HCT116 (cell line): ENCODE measurements at regions of chr1 and their contacts with region 1.

Region 1: GRCh38 chr1:197356723-197357533 is 88.9 kb downstream of the CRB1 start:
- DNase-seq: peak; percentile 42
- ATAC-seq: peak; percentile 91
- H3K4me3 ChIP-seq: no peak overlapping the region
- H3K27ac ChIP-seq: no peak overlapping the region
- H3K4me1 ChIP-seq: no peaks in the 10 kb centered on the region
- H3K27me3 ChIP-seq: no peaks in the 10 kb centered on the region
- CTCF ChIP-seq: peak; percentile 64 to 86 (median 79)
- POLR2A ChIP-seq: no peak
- RAD21 ChIP-seq: peak; percentile 86

Region 2: GRCh38 chr1:196723322-196724185 is 633.4 kb before region 1 on chr1:
- CTCF ChIA-PET with region 1: interaction called, 3 read pairs
- POLR2A ChIA-PET with region 1: no interaction called
- RAD21 ChIA-PET with region 1: no interaction called
- intact Hi-C with region 1: loop called (anchors 10 kb)
- DNase-seq: peak; percentile 64
- ATAC-seq: peak; percentile 99
- H3K4me3 ChIP-seq: no peak overlapping the region
- H3K27ac ChIP-seq: no peak overlapping the region
- H3K4me1 ChIP-seq: no peaks in the 10 kb centered on the region
- H3K27me3 ChIP-seq: no peaks in the 10 kb centered on the region
- CTCF ChIP-seq: peak; percentile 34 to 80 (median 79); a peak in 5 of 6 replicates
- POLR2A ChIP-seq: no peak
- RAD21 ChIP-seq: peak; percentile 53

Region 3: DNA sequence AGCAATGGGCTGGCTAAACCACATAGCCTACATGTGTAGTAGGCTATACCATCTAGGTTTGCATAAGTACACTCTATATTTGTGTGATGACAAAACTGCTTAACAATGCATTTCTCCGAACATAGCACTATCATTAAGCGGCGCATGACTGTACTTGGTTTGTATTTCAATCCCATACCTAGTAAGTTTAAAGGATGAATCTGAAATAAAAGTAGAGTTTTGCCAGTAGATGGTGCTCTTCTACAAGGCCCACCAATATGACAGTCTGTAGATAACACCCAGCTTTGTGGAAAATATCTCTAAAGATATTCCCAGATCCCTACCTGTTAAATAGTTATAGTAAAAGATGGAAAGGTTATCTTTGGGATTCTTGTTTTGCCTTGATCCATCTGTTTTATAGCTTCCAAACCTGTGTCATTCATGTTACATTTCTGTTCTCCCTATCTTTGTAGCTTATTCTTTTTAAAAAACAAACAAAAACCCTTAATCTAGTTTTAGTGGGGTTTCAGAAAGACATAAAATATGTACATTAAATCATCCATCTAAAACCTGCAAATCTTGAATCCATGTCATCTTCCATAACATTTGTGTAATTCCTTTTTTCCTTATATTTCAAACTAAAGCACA is 176.6 kb before region 1 on chr1:
- CTCF ChIA-PET with region 1: interaction called, 32 read pairs
- POLR2A ChIA-PET with region 1: no interaction called
- RAD21 ChIA-PET with region 1: interaction called in 1 of 2 experiments, 3 read pairs
- intact Hi-C with region 1: loop called (anchors 1 kb)
- DNase-seq: no peak
- ATAC-seq: peak; percentile 80
- H3K4me3 ChIP-seq: no peak overlapping the region
- H3K27ac ChIP-seq: no peak overlapping the region
- H3K4me1 ChIP-seq: peaks cover 0 to 6% of the 10 kb centered on the region in 2 experiments; a peak in 2 of 4 replicates
- H3K27me3 ChIP-seq: no peaks in the 10 kb centered on the region
- CTCF ChIP-seq: peak; percentile 50 to 72 (median 59); a peak in 5 of 6 replicates
- POLR2A ChIP-seq: no peak
- RAD21 ChIP-seq: peak; percentile 71

Region 4: DNA sequence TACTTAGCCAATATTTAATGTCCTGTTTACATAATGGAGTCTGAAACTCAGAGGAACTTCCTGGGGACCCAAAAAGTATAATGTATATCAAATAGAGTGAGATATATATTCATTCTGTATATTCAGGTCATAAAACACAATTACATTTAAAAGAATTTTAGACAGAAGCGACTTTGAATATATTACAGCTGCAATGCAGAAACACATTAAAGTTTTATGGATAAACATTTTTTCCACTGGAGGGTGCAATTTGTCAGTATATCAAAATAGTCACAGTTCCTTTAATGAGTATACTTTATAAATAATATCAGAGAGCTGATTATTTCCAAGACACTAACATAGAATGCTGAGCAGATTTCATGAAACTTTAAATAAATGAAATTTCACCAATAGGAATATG is 132.8 kb before region 1 on chr1:
- CTCF ChIA-PET with region 1: interaction called, 16 read pairs
- POLR2A ChIA-PET with region 1: no interaction called
- RAD21 ChIA-PET with region 1: interaction called, 3 to 5 read pairs
- intact Hi-C with region 1: loop called (anchors 1 kb)
- DNase-seq: no peak
- ATAC-seq: no peak
- H3K4me3 ChIP-seq: no peak overlapping the region
- H3K27ac ChIP-seq: no peak overlapping the region
- H3K4me1 ChIP-seq: no peaks in the 10 kb centered on the region
- H3K27me3 ChIP-seq: no peaks in the 10 kb centered on the region
- CTCF ChIP-seq: peak; percentile 6 to 56 (median 17); a peak in 2 of 6 replicates
- POLR2A ChIP-seq: no peak
- RAD21 ChIP-seq: peak; percentile 45; the same call in 1 of the 2 replicates

Region 5: GRCh38 chr1:197302775-197303174 is 54.2 kb before region 1 on chr1:
- CTCF ChIA-PET with region 1: no interaction called
- POLR2A ChIA-PET with region 1: no interaction called
- RAD21 ChIA-PET with region 1: no interaction called
- intact Hi-C with region 1: no loop called
- DNase-seq: no peak
- ATAC-seq: no peak
- H3K4me3 ChIP-seq: no peak overlapping the region
- H3K27ac ChIP-seq: no peak overlapping the region
- H3K4me1 ChIP-seq: no peaks in the 10 kb centered on the region
- H3K27me3 ChIP-seq: no peaks in the 10 kb centered on the region
- CTCF ChIP-seq: no peak
- POLR2A ChIP-seq: no peak
- RAD21 ChIP-seq: no peak

Region 6: GRCh38 chr1:197327776-197328364 is 29.1 kb before region 1 on chr1:
- CTCF ChIA-PET with region 1: interaction called, 4 read pairs
- POLR2A ChIA-PET with region 1: no interaction called
- RAD21 ChIA-PET with region 1: no interaction called
- intact Hi-C with region 1: loop called (anchors 2 kb)
- DNase-seq: no peak
- ATAC-seq: peak; percentile 53; the same call in 1 of the 2 replicates
- H3K4me3 ChIP-seq: no peak overlapping the region
- H3K27ac ChIP-seq: no peak overlapping the region
- H3K4me1 ChIP-seq: no peaks in the 10 kb centered on the region
- H3K27me3 ChIP-seq: no peaks in the 10 kb centered on the region
- CTCF ChIP-seq: peak; percentile 33 to 66 (median 55); a peak in 5 of 6 replicates
- POLR2A ChIP-seq: no peak
- RAD21 ChIP-seq: peak; percentile 58

Region 7: GRCh38 chr1:197343663-197344273 is 13.2 kb before region 1 on chr1:
- CTCF ChIA-PET with region 1: interaction called, 18 read pairs
- POLR2A ChIA-PET with region 1: no interaction called
- RAD21 ChIA-PET with region 1: no interaction called
- intact Hi-C with region 1: no loop called
- DNase-seq: no peak
- ATAC-seq: no peak
- H3K4me3 ChIP-seq: no peak overlapping the region
- H3K27ac ChIP-seq: no peak overlapping the region
- H3K4me1 ChIP-seq: no peaks in the 10 kb centered on the region
- H3K27me3 ChIP-seq: no peaks in the 10 kb centered on the region
- CTCF ChIP-seq: no peak
- POLR2A ChIP-seq: no peak
- RAD21 ChIP-seq: no peak